Heart right ventricle (tissue), 16 donors: ENCODE measurements at regions of chr17 and their contacts with region 1.

Region 1: GRCh38 chr17:4332296-4333121 is 34.0 kb downstream of the UBE2G1 start:
- DNase-seq: no peak
- ATAC-seq: peak in 4 of 8 donors; percentile 15 to 42 (median 28)
- H3K4me3 ChIP-seq: no peak overlapping the region
- H3K27ac ChIP-seq: peak overlapping the region in 1 of 10 donors; percentile 38
- H3K4me1 ChIP-seq: peaks cover 5 to 58% (median 34%) of the 10 kb centered on the region in 9 donors
- H3K27me3 ChIP-seq: no peaks in the 10 kb centered on the region
- CTCF ChIP-seq: no peak

Region 2: GRCh38 chr17:4310349-4311060 is 22.0 kb before region 1 on chr17:
- intact Hi-C with region 1: loop called in 1 of 10 experiments (anchors 2 kb)
- DNase-seq: peak in 1 of 2 donors; percentile 60
- ATAC-seq: peak; percentile 69 to 91 (median 77)
- H3K4me3 ChIP-seq: no peak overlapping the region
- H3K27ac ChIP-seq: peak overlapping the region; percentile 22 to 76 (median 64)
- H3K4me1 ChIP-seq: peaks cover 8 to 78% (median 55%) of the 10 kb centered on the region in 9 donors
- H3K27me3 ChIP-seq: no peaks in the 10 kb centered on the region
- CTCF ChIP-seq: no peak